ENCODE measurements at regions of chr4 and their contacts with region 1.

Region 1: GRCh38 chr4:76067652-76068286 is 6.7 kb upstream of the ART3 start:
- DNase-seq: no peak
- ATAC-seq: peak; percentile 99
- H3K4me3 ChIP-seq: no peak overlapping the region
- H3K27ac ChIP-seq: no peak overlapping the region
- H3K4me1 ChIP-seq: no peaks in the 10 kb centered on the region
- H3K27me3 ChIP-seq: peaks cover 0 to 6% of the 10 kb centered on the region in 2 experiments; a peak in 3 of 4 replicates
- CTCF ChIP-seq: peak; percentile 76 to 86 (median 79)
- EP300 ChIP-seq: no peak
- POLR2A ChIP-seq: no peak
- RAD21 ChIP-seq: peak; percentile 95

Region 2: DNA sequence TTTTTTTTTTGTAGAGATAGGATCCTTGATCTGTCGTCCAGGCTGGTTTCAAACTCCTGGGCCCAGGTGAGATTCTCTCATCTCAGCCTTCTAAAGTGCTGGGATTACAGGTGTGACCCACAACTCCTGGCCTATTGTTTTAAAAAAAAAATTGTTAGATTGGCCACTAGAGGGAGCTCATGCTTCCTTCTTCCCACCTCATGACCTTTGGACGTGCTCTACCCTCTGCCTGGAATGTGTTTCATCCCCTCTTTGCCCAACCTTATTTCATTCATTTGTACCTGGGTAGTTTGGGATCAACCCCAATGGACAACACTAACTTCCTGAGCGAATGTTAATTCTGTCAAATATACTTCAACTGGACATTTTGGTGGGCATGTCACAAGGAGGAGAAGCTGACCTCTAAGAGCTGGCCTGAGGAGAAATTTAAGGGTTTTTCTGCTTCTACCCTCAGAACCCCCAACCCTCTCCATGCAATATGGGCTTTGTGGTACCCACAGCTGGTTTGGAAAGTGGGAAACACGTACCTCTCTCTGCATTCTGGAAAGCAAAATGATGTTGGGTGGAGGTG is 171.9 kb before region 1 on chr4:
- CTCF ChIA-PET with region 1: interaction called, 11 read pairs
- POLR2A ChIA-PET with region 1: no interaction called
- RAD21 ChIA-PET with region 1: no interaction called
- SMC1A ChIA-PET with region 1: interaction called, 3 read pairs
- in situ Hi-C with region 1: no loop called
- intact Hi-C with region 1: loop called (anchors 5 kb)
- DNase-seq: no peak
- ATAC-seq: peak; percentile 87
- H3K4me3 ChIP-seq: no peak overlapping the region
- H3K27ac ChIP-seq: no peak overlapping the region
- H3K4me1 ChIP-seq: no peaks in the 10 kb centered on the region
- H3K27me3 ChIP-seq: no peaks in the 10 kb centered on the region
- CTCF ChIP-seq: peak; percentile 59 to 64 (median 63)
- EP300 ChIP-seq: no peak
- POLR2A ChIP-seq: no peak
- RAD21 ChIP-seq: peak; percentile 41

Region 3: DNA sequence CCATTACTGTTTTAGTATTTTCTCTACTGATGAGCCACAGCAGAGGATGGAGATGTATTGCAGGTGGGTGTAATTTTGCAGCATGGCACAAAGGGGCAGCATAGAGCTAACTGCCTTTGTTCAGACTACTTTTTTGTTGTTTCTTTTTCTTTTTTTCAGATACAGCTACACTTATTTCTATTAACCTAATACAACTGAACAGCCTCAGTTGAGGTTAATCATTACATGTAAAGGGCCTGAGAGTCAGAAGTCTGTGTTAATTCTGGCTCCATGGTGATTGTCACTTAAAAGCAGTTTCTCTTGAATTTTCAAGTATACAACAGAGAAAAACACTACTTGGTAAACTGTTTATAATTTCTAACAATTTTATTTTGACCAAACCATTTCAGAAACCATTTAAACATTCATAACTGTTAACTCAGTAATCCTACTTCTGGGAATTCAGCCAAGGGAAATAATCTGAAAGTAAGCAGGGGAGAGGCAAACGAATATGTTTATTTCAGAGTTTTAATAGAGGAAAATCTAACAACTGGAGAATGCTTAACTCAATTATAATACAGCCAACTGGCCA is 151.6 kb before region 1 on chr4:
- CTCF ChIA-PET with region 1: interaction called, 8 read pairs
- POLR2A ChIA-PET with region 1: no interaction called
- RAD21 ChIA-PET with region 1: interaction called, 6 read pairs
- SMC1A ChIA-PET with region 1: interaction called, 5 read pairs
- in situ Hi-C with region 1: loop called (anchors 5 kb)
- intact Hi-C with region 1: loop called (anchors 2 kb)
- DNase-seq: no peak
- ATAC-seq: peak; percentile 89
- H3K4me3 ChIP-seq: no peak overlapping the region
- H3K27ac ChIP-seq: no peak overlapping the region
- H3K4me1 ChIP-seq: no peaks in the 10 kb centered on the region
- H3K27me3 ChIP-seq: no peaks in the 10 kb centered on the region
- CTCF ChIP-seq: peak; percentile 73 to 91 (median 76)
- EP300 ChIP-seq: no peak
- POLR2A ChIP-seq: no peak
- RAD21 ChIP-seq: peak; percentile 67

Region 4: DNA sequence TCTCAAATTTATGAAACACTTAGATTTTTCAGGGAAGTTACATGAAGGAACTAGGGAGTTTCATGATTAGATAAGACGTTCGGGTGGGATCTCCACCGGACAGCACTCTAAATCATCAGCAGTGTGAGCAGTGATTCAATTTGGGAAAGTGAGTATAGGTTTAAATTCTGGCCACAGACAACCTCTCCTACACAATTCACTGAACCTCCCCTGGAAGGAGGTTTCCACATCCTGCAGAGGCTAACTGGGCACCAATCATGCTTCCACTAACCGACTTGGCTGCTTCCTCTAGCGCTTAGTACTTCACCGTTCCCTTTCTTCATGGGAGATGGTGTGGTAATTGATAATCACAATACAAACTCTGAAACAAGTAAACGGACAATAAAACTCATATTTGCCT is 66.1 kb before region 1 on chr4:
- CTCF ChIA-PET with region 1: interaction called, 95 read pairs
- POLR2A ChIA-PET with region 1: interaction called, 4 read pairs
- RAD21 ChIA-PET with region 1: interaction called, 28 read pairs
- SMC1A ChIA-PET with region 1: interaction called, 95 read pairs
- in situ Hi-C with region 1: loop called (anchors 5 kb)
- intact Hi-C with region 1: no loop called
- DNase-seq: no peak
- ATAC-seq: no peak
- H3K4me3 ChIP-seq: no peak overlapping the region
- H3K27ac ChIP-seq: no peak overlapping the region
- H3K4me1 ChIP-seq: no peaks in the 10 kb centered on the region
- H3K27me3 ChIP-seq: peaks cover 5 to 8% of the 10 kb centered on the region in 2 experiments; a peak in 2 of 4 replicates
- CTCF ChIP-seq: no peak
- EP300 ChIP-seq: no peak
- POLR2A ChIP-seq: no peak
- RAD21 ChIP-seq: no peak

Region 5: DNA sequence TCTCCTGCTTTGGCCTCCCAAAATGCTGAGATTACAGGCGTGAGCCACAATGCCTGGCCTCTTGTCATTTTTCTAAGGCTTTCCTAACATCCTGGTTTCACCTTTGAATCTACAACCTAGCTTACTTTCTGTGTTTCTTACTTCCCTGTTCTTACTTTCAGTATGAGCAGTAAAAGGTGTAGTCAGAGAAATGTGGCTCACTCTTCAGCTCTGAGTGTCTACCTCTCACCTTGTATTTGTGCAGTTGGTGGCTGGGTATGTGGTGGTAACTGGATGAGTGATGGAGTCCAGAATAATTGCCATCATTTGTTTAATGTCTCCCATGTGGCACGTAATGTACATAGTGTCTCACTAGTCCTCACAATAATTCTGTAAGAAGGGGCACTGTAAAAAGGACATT is 12.8 kb before region 1 on chr4:
- CTCF ChIA-PET with region 1: interaction called, 13 read pairs
- POLR2A ChIA-PET with region 1: no interaction called
- RAD21 ChIA-PET with region 1: interaction called, 11 read pairs
- SMC1A ChIA-PET with region 1: interaction called, 26 read pairs
- in situ Hi-C with region 1: no loop called
- intact Hi-C with region 1: no loop called
- DNase-seq: peak; percentile 74
- ATAC-seq: peak; percentile 98
- H3K4me3 ChIP-seq: no peak overlapping the region; the same call in 1 of the 2 replicates
- H3K27ac ChIP-seq: no peak overlapping the region
- H3K4me1 ChIP-seq: peaks cover 29% of the 10 kb centered on the region
- H3K27me3 ChIP-seq: peaks cover 0 to 2% of the 10 kb centered on the region in 2 experiments; a peak in 2 of 4 replicates
- CTCF ChIP-seq: no peak
- EP300 ChIP-seq: peak; percentile 26 to 85; a peak in 2 of 4 replicates
- POLR2A ChIP-seq: no peak
- RAD21 ChIP-seq: 0 out of 2 replicates have a peak, but pooled peaks have one; percentile 10